ENCODE measurements at regions of chr1 and their contacts with region 1.

Region 1: GRCh38 chr1:47437447-47438164 is at the start of gene FOXD2:
- DNase-seq: peak; percentile 24
- H3K4me3 ChIP-seq: peak within 1 kb of the TSS; percentile 79
- H3K27ac ChIP-seq: no peak within 1 kb of the TSS
- H3K27me3 ChIP-seq: peaks cover 35% of the 10 kb centered on the region
- CTCF ChIP-seq: peak; percentile 68
- polyA plus RNA-seq, gene FOXD2: 0.01 TPM in 1 of 2 replicates, not detected in the other

Region 2: DNA sequence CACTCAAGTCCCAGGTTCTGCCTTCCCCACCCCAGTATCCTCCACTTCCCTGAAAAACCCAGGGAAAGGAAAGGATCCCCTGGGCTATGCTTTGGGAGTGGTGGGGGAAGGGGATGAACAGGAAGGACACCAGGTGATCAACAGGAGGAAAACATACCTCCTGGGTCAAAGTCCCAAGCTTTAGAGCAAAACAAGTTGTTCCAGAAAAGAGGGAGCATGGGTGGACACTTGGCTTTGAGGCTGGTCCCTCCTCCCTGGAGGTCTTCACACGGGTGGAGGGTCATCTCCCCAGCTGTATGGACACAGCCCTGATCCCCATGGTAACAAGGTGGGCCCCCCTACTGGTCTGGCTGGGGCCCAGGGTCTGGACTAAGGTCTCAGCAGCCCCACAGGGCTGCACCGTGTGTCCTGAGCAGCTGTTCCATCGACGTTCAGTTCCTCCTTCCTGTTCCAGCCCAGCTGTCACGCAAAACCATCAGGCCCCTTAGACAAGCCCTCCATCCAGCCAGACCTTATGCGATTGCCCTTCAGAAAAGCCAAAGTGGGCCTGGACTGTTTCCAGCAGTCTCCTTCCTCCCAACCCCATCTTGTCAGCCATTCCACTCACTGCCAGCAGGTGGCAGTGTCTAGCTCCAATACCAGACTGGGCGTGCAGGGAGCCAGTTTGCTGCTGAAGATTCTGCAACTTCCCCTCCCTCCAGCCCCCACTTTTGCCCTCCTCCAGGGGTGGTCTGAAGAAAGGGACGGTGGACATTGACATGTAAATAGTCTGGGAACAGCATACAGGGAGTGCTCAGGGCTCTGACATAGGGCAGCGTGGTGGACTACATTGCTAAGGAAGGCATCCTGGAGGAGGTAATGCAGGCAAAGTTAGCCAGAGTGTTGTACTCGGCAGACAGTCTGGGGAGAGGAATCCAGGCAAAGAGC is 244.9 kb before region 1 on chr1:
- CTCF ChIA-PET with region 1: interaction called, 10 read pairs
- POLR2A ChIA-PET with region 1: no interaction called
- DNase-seq: peak; percentile 32
- H3K4me3 ChIP-seq: no peak overlapping the region
- H3K27ac ChIP-seq: no peak overlapping the region
- H3K27me3 ChIP-seq: peaks cover 7% of the 10 kb centered on the region
- CTCF ChIP-seq: peak; percentile 96

Region 3: GRCh38 chr1:47388891-47389238 is 48.7 kb before region 1 on chr1:
- CTCF ChIA-PET with region 1: interaction called, 219 read pairs
- POLR2A ChIA-PET with region 1: interaction called, 5 read pairs
- DNase-seq: no peak
- H3K4me3 ChIP-seq: no peak overlapping the region
- H3K27ac ChIP-seq: no peak overlapping the region
- H3K27me3 ChIP-seq: no peaks in the 10 kb centered on the region
- CTCF ChIP-seq: peak; percentile 92

Region 4: GRCh38 chr1:47424336-47424982 is 13.1 kb before region 1 on chr1:
- CTCF ChIA-PET with region 1: interaction called, 96 read pairs
- POLR2A ChIA-PET with region 1: no interaction called
- DNase-seq: no peak
- H3K4me3 ChIP-seq: no peak overlapping the region
- H3K27ac ChIP-seq: no peak overlapping the region
- H3K27me3 ChIP-seq: peaks cover 1% of the 10 kb centered on the region
- CTCF ChIP-seq: peak; percentile 91

Region 5: GRCh38 chr1:47569681-47570470 is 132.3 kb after region 1 on chr1:
- CTCF ChIA-PET with region 1: interaction called, 28 read pairs
- POLR2A ChIA-PET with region 1: no interaction called
- DNase-seq: peak; percentile 68
- H3K4me3 ChIP-seq: no peak overlapping the region
- H3K27ac ChIP-seq: no peak overlapping the region
- H3K27me3 ChIP-seq: no peaks in the 10 kb centered on the region
- CTCF ChIP-seq: peak; percentile 61

Region 6: DNA sequence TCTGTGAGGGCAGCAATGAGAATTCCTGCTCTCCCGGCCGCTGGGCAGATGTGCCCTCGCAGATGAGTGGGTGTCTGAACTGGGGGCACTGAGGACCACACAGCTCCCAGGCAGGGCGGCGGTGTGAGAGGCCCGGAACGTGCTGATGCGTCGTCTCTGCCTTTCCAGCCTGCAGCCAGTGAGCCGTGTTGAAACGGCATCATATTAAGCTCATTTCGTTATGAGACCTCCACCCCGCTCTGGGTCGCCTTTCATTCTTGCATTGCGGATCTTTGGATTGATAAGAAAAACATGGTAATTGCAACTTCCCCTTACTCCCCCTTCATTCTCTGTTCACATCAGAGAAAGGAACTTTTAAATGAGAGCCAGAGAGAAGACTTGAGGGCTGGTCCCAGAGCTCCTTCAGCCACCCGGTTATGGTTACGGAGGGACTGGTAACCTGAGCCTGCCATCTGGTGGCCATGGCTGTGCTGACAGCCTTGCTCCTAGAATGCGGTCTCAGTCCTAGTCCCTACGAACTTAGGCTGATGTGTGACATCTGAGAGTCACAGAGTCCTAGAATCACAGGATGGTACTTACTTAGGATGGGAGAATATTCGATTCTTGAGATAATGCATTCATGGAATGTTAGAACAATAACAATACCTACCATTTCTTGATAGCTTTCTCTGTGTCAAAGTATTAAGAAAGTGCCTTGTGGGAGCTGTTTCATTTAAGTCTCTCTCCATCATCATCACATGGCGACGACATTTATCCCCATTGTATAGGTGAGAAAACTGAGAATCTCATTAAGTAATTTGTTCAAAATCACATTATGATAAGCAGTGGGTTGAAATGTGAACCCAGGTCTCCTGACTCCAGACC is 288.6 kb after region 1 on chr1:
- CTCF ChIA-PET with region 1: interaction called, 243 read pairs
- POLR2A ChIA-PET with region 1: interaction called, 3 read pairs
- DNase-seq: peak; percentile 26
- H3K4me3 ChIP-seq: peak overlapping the region; percentile 25; the same call in 1 of the 2 replicates
- H3K27ac ChIP-seq: no peak overlapping the region
- H3K27me3 ChIP-seq: peaks cover 24% of the 10 kb centered on the region
- CTCF ChIP-seq: peak; percentile 89

Region 7: GRCh38 chr1:47809301-47810084 is 371.9 kb after region 1 on chr1:
- CTCF ChIA-PET with region 1: no interaction called
- POLR2A ChIA-PET with region 1: no interaction called
- DNase-seq: no peak
- H3K4me3 ChIP-seq: no peak overlapping the region
- H3K27ac ChIP-seq: no peak overlapping the region
- H3K27me3 ChIP-seq: no peaks in the 10 kb centered on the region
- CTCF ChIP-seq: no peak

Region 8: DNA sequence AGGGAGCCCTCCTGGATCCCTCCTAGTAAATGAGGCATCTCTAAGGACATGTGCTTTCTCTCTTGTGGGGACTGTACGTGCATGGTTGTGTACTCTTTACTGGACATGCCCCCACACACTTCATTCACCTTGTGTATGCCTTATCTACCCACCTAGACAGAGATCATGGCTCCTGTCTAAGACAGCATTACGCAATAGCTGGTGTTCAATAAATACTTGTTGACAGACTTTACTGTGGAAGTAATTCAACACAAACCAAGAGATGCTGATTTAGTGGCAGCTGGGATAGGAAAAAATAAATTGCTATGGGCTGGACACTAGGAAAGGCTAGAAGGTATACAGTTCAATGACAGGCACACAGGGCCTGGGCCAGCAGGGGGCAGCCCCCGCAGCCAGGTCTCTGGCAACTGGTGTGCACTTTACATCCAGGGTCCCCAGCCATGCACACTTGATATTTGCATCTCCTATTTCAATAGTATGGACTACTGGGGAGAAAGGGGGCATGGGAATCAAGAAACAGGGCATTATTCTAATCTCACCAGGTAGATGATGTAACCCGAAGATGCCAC is 535.3 kb after region 1 on chr1:
- CTCF ChIA-PET with region 1: no interaction called
- POLR2A ChIA-PET with region 1: no interaction called
- DNase-seq: no peak
- H3K4me3 ChIP-seq: no peak overlapping the region
- H3K27ac ChIP-seq: no peak overlapping the region
- H3K27me3 ChIP-seq: no peaks in the 10 kb centered on the region
- CTCF ChIP-seq: peak; percentile 24; the same call in 1 of the 2 replicates